Calu3 (cell line): ENCODE measurements at regions of chr5 and their contacts with region 1.

Region 1: DNA sequence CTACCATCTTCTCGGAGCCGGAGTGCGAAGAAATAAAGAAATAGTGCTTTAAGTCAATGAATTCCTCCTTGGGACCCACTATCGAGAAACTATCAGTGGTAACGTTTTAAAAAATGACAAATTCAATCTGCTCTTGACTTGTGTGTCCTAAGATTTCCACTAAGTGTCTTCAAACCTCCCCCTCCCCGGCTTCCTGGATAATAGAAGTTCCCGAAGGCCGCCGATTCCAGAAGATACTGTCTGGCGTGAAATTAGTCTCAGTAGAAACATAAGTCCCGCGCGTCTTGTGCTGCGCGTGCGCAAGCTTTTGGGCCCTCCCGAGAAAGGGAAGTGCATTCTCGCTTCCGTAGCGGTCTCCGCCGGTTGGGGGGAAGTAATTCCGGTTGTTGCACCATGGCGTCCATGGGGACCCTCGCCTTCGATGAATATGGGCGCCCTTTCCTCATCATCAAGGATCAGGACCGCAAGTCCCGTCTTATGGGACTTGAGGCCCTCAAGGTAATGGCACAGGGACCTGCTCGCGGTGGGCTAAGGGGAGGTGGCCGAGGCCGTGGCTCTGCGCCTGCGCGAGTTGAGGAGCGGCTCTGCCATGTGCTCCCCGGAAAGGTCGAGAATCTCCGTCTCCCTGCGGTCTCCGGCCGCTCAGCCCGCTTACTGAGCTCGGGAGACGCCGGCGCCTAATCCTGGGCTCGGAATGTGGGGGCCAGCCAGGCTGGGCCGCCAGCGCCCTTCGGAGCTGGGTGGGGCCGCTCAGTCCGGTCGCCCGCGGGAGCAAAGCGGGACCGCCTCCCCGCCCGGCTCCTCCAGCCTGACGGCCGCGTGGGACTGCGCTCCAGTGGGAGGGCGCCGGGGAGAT is at the start of gene CCT5:
- DNase-seq: peak; percentile 86
- H3K4me3 Mint-ChIP-seq: peak within 1 kb of the TSS; percentile 86
- H3K27ac Mint-ChIP-seq: peak within 1 kb of the TSS; percentile 89
- H3K4me1 Mint-ChIP-seq: peaks cover 25% of the 10 kb centered on the region
- H3K27me3 Mint-ChIP-seq: no peaks in the 10 kb centered on the region
- CTCF ChIP-seq: no peak
- total RNA-seq, gene CCT5: 404 and 410 TPM in 2 replicates

Region 2: DNA sequence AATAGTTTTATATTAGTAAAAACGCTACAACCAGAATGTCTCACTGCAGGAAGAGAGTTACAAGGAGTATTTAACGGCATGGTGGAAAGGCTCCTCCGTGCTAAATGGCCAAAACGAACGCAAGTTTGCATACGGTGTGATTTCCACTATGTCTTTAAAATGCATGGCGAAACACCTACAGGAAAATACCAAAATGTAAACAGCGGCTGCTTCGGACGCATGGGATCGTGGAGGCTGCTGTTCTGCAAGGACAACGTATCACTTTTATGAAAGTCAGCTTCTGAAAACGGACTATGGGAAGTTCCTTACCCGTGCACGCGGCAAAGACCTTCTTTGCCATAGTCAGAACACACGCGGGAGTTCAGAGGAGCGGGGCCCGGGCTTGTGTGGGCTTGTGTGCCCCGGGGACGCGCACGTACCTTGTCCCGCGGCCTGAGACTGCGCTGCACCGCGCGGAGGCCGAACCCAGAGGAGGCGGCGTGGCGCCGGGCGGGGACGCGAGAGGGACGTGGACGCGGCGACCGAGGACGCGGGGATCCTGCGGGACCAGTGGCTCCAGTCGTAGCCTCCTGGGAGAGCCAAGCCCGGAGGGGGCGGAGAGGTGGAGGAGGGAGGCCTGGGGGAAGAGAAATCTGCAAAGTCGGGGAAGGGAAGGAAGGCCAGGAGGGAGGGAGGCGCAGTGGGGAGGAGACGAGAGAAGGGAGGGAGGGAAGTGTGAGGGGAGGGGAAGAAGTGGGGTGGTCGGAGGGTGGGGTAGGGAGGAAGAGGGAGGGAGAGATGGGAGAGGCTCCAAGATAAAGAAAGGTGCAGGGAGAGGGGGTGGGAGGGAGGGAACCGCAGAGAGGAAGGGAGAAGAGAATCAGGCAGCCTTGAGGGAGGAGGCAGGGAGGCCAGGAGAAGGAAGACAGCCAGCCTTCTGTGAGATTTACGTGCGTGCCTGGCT is 57.3 kb after region 1 on chr5 and contains the start of gene CMBL:
- CTCF ChIA-PET with region 1: no interaction called
- intact Hi-C with region 1: loop called (anchors 2 kb)
- DNase-seq: peak; percentile 51
- H3K4me3 Mint-ChIP-seq: peak within 1 kb of the TSS; percentile 94
- H3K27ac Mint-ChIP-seq: peak within 1 kb of the TSS; percentile 72
- H3K4me1 Mint-ChIP-seq: peaks cover 38% of the 10 kb centered on the region
- H3K27me3 Mint-ChIP-seq: no peaks in the 10 kb centered on the region
- CTCF ChIP-seq: no peak
- total RNA-seq, gene CMBL: 12.9 and 17.0 TPM in 2 replicates